Heart right ventricle (tissue), 16 donors: ENCODE measurements at regions of chr12 and their contacts with region 1.

Region 1: DNA sequence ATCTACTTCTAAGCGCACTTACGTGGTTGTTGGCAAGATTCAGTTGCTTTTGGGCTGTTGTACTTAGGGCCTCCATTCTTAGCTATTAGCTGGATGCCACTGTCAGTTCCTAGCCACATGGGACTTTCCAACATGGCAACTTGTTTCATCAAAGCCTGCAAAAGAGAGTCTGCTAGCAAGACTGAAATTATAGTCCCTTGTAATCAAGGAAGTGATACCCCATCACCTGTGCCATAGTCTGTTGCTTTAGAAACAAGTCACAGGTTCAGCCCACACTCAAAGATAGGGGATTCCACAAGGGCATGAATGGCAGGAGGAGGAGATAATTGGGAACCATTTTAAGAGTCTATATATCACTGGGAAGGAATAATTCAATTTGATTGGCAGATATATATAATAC is 27.1 kb upstream of the SLC17A8 start:
- DNase-seq: no peak
- ATAC-seq: no peak
- H3K4me3 ChIP-seq: no peak overlapping the region
- H3K27ac ChIP-seq: no peak overlapping the region
- H3K4me1 ChIP-seq: no peaks in the 10 kb centered on the region
- H3K27me3 ChIP-seq: no peaks in the 10 kb centered on the region
- CTCF ChIP-seq: no peak

Region 2: GRCh38 chr12:100234598-100235304 is 95.0 kb before region 1 on chr12:
- intact Hi-C with region 1: loop called in 1 of 10 experiments (anchors 10 kb)
- DNase-seq: no peak
- ATAC-seq: peak in 7 of 8 donors; percentile 13 to 79 (median 63)
- H3K4me3 ChIP-seq: no peak overlapping the region
- H3K27ac ChIP-seq: peak overlapping the region in 4 of 10 donors; percentile 17 to 36 (median 28)
- H3K4me1 ChIP-seq: no peaks in the 10 kb centered on the region
- H3K27me3 ChIP-seq: no peaks in the 10 kb centered on the region
- CTCF ChIP-seq: peak; percentile 61 to 90 (median 81)